ENCODE measurements at regions of chr6 and their contacts with region 1.

Region 1: GRCh38 chr6:34362909-34363680 is 29.4 kb downstream of the NUDT3 start:
- DNase-seq: no peak
- ATAC-seq: no peak
- H3K4me3 ChIP-seq: no peak overlapping the region
- H3K4me3 Mint-ChIP-seq: peak overlapping the region in 1 of 10 donors; percentile 24
- H3K27ac ChIP-seq: no peak overlapping the region
- H3K27ac Mint-ChIP-seq: peak overlapping the region in 5 of 9 donors; percentile 3 to 54 (median 12)
- H3K4me1 ChIP-seq: peaks cover 0 to 2% of the 10 kb centered on the region in 2 donors
- H3K4me1 Mint-ChIP-seq: peaks cover 34 to 64% (median 51%) of the 10 kb centered on the region in 7 donors
- H3K27me3 ChIP-seq: no peaks in the 10 kb centered on the region
- H3K27me3 Mint-ChIP-seq: no peaks in the 10 kb centered on the region

Region 2: DNA sequence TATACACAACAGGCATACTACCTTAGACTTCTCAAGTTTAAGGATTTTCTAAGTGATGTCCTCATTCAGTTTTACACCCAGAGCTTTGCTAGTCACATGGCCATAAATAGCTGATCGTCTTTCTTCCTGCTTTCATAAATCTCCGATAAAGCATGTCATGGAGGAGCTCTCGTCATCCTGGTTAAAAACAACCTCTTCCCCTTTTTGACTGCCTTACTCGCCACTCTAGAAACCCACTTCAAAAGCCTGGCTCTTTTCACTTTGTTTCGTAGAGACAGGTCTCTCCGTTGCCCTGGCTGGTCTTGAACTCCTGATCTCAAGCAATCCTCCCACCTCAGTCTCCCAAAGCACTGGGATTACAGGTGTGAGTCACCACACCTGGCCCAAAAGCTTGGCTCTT is 47.3 kb before region 1 on chr6:
- CTCF ChIA-PET with region 1: no interaction called
- POLR2A ChIA-PET with region 1: no interaction called
- intact Hi-C with region 1: loop called in 1 of 2 experiments (anchors 10 kb)
- DNase-seq: peak in 3 of 9 donors; percentile 2 to 11 (median 6)
- ATAC-seq: peak; percentile 81
- H3K4me3 ChIP-seq: no peak overlapping the region
- H3K4me3 Mint-ChIP-seq: peak overlapping the region; percentile 15 to 66 (median 56)
- H3K27ac ChIP-seq: peak overlapping the region; percentile 27
- H3K27ac Mint-ChIP-seq: peak overlapping the region; percentile 17 to 94 (median 73)
- H3K4me1 ChIP-seq: peaks cover 0 to 10% of the 10 kb centered on the region in 2 donors
- H3K4me1 Mint-ChIP-seq: peaks cover 24 to 71% (median 58%) of the 10 kb centered on the region in 7 donors
- H3K27me3 ChIP-seq: no peaks in the 10 kb centered on the region
- H3K27me3 Mint-ChIP-seq: no peaks in the 10 kb centered on the region

Region 3: DNA sequence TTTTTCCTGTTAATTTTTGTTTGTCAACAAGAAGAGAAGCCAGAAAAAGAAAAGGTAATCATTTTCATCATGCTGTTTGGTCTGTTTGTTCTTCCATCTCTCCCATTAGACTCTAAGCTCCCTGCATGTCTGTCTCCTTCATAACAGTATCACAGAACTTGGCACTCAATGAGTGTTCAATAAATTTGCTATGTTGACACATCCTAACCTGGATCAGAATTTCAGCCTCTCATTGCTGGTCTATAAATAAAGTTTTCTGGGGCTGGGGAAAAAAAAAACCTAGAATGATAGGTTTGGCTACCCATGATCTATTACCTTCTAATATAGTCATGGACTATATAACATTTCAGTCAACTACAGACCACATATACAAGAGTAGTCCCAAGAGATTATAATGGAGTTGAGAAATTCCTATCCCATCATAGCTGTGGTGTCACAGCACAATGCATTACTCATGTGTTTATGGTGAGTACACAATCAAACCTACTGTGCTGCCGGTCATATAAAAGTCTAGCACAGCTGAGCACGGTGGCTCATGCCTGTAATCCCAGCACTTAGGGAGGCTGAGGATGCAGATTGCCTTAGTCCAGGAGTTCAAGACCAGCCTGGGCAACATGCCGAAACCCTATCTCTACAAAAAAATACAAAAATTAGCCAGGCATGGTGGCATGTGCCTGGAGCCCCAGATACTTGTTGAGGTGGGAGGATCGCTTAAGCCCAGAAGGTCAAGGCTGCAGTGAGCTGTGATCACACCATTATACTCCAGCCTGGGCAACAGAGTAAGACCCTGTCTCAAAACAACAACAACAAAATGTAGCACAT is 23.4 kb after region 1 on chr6:
- CTCF ChIA-PET with region 1: no interaction called
- POLR2A ChIA-PET with region 1: no interaction called
- intact Hi-C with region 1: no loop called
- DNase-seq: no peak
- ATAC-seq: peak; percentile 34
- H3K4me3 ChIP-seq: no peak overlapping the region
- H3K4me3 Mint-ChIP-seq: no peak overlapping the region
- H3K27ac ChIP-seq: no peak overlapping the region
- H3K27ac Mint-ChIP-seq: peak overlapping the region in 2 of 9 donors; percentile 6 to 13
- H3K4me1 ChIP-seq: peaks cover 7 to 10% of the 10 kb centered on the region in 2 donors
- H3K4me1 Mint-ChIP-seq: peaks cover 3 to 47% (median 26%) of the 10 kb centered on the region in 7 donors
- H3K27me3 ChIP-seq: no peaks in the 10 kb centered on the region
- H3K27me3 Mint-ChIP-seq: no peaks in the 10 kb centered on the region

Region 4: GRCh38 chr6:35238843-35239311 is 875.8 kb after region 1 on chr6:
- CTCF ChIA-PET with region 1: no interaction called
- POLR2A ChIA-PET with region 1: no interaction called
- intact Hi-C with region 1: no loop called
- DNase-seq: no peak
- ATAC-seq: no peak
- H3K4me3 ChIP-seq: no peak overlapping the region
- H3K4me3 Mint-ChIP-seq: no peak overlapping the region
- H3K27ac ChIP-seq: no peak overlapping the region
- H3K27ac Mint-ChIP-seq: no peak overlapping the region
- H3K4me1 ChIP-seq: no peaks in the 10 kb centered on the region
- H3K4me1 Mint-ChIP-seq: peaks cover 1 to 6% (median 4%) of the 10 kb centered on the region in 7 donors
- H3K27me3 ChIP-seq: no peaks in the 10 kb centered on the region
- H3K27me3 Mint-ChIP-seq: peaks cover 0 to 6% (median 0%) of the 10 kb centered on the region in 5 donors

Measured in naive thymus-derived CD4-positive, alpha-beta T cell (primary cell).